ENCODE measurements at regions of chr1 and their contacts with region 1.

Region 1: GRCh38 chr1:172745014-172745413 is 86.1 kb downstream of the FASLG start:
- DNase-seq: peak; percentile 26
- H3K4me3 ChIP-seq: no peak overlapping the region
- H3K27ac ChIP-seq: peak overlapping the region in 3 of 4 donors; percentile 52 to 75 (median 59)
- H3K4me1 ChIP-seq: peaks cover 0 to 24% (median 12%) of the 10 kb centered on the region in 4 donors
- H3K27me3 ChIP-seq: no peaks in the 10 kb centered on the region
- CTCF ChIP-seq: peak; percentile 52 to 82 (median 61)
- EP300 ChIP-seq: no peak
- POLR2A ChIP-seq: no peak

Region 2: DNA sequence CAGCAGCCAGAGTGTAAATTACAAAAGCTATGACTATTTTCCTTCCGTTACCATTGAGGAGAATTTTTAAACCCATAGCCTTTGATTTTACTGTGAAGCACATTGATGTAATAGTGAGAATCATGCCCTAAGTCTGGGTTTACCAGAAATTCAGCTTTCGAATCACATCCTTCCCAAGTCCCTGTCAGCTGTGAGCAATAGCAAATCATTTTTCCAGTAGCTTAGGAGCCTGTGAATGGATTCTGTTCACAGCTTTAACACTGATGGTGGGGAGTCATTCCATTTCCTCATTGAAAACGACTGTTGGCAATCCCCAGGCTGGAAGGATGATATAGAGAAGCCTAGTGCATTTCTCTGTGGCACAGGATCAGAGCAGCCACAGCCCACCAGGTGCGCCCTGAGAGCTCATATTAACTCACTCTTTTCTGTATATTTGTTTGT is 406.7 kb before region 1 on chr1:
- in situ Hi-C with region 1: no loop called
- intact Hi-C with region 1: no loop called
- DNase-seq: no peak
- H3K4me3 ChIP-seq: no peak overlapping the region
- H3K27ac ChIP-seq: no peak overlapping the region
- H3K4me1 ChIP-seq: peaks cover 0 to 7% (median 3%) of the 10 kb centered on the region in 4 donors
- H3K27me3 ChIP-seq: no peaks in the 10 kb centered on the region
- CTCF ChIP-seq: no peak
- EP300 ChIP-seq: no peak
- POLR2A ChIP-seq: no peak

Region 3: DNA sequence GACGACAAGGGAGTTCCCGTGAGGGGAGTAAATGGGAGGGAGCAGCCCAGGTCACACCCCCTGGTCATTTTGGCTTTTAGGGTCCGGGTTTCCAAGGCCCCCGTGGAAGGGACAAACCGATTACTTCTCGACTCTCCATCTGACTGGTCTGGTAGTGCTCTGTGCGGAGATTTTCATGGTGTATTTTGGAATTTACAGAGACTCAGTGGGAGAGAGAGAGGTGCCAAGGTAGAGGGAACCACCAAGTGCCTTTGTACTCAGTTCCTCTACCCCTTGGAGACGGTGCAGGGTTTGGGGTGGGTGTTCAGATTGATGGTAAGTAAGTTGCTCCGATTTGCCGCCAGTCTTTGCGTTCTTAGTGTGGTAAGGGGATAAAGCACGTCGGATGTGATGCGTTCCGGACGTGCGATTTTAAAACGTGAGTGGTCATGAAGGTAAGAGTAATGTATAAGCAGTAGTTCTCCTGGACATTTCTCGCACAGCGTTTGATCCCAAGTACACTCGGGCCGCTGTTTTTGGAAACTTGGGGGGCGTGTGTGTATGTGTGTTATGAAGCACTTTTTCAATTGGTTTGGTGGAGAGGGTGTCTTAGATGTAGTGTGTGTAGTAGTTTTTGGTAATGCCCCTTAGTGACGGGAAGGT is 211.4 kb before region 1 on chr1:
- in situ Hi-C with region 1: no loop called
- intact Hi-C with region 1: no loop called
- DNase-seq: no peak
- H3K4me3 ChIP-seq: peak overlapping the region; percentile 72 to 85 (median 78)
- H3K27ac ChIP-seq: peak overlapping the region; percentile 97 to 99 (median 99)
- H3K4me1 ChIP-seq: peaks cover 7 to 37% (median 22%) of the 10 kb centered on the region in 4 donors
- H3K27me3 ChIP-seq: no peaks in the 10 kb centered on the region
- CTCF ChIP-seq: peak in 1 of 5 experiments; percentile 4
- EP300 ChIP-seq: no peak
- POLR2A ChIP-seq: no peak

Region 4: DNA sequence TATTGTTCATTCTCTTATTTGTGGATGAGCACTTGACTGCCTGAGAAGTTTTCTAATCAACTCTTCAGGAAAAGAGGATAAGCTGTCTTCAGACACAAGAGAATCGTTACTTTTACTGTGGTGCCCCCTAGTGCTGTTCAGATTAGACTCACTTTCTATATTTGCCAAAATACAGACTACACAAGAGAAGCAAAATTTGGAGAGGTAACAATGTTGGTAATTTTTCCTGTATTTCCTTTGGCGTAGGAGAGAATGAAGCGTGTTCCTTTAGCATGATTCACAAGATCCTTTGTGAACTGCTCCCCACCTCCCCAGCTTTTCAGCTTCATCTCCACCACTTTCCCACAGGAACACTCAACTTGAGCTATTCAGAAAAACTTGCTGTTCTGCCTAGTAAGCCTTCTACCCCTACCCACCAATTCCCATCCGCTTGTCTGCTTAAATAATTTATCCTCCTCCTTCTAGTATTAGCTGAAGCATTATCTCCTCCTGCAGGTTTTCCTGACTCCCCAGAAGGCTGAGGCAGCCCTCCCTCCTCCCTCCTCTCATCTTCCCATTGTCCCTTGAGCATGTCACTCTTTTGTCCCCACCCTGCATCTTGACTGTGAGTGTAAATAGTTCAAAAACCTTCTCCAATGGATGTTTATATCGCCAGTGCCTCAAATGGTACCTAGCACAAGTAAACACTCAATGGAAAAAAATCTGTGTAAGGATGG is 457.6 kb after region 1 on chr1:
- in situ Hi-C with region 1: loop called in 3 of 4 experiments (anchors 5 to 10 kb)
- intact Hi-C with region 1: loop called (anchors 10 kb)
- DNase-seq: peak; percentile 16
- H3K4me3 ChIP-seq: no peak overlapping the region
- H3K27ac ChIP-seq: no peak overlapping the region
- H3K4me1 ChIP-seq: peaks cover 0 to 27% (median 7%) of the 10 kb centered on the region in 4 donors
- H3K27me3 ChIP-seq: no peaks in the 10 kb centered on the region
- CTCF ChIP-seq: peak; percentile 54 to 75 (median 63)
- EP300 ChIP-seq: no peak
- POLR2A ChIP-seq: no peak

Region 5: GRCh38 chr1:173212952-173213491 is 468.0 kb after region 1 on chr1:
- in situ Hi-C with region 1: loop called in 3 of 4 experiments (anchors 5 to 10 kb)
- intact Hi-C with region 1: loop called (anchors 10 kb)
- DNase-seq: no peak
- H3K4me3 ChIP-seq: no peak overlapping the region
- H3K27ac ChIP-seq: no peak overlapping the region
- H3K4me1 ChIP-seq: peaks cover 0 to 14% (median 7%) of the 10 kb centered on the region in 4 donors
- H3K27me3 ChIP-seq: no peaks in the 10 kb centered on the region
- CTCF ChIP-seq: no peak
- EP300 ChIP-seq: no peak
- POLR2A ChIP-seq: no peak

Region 6: DNA sequence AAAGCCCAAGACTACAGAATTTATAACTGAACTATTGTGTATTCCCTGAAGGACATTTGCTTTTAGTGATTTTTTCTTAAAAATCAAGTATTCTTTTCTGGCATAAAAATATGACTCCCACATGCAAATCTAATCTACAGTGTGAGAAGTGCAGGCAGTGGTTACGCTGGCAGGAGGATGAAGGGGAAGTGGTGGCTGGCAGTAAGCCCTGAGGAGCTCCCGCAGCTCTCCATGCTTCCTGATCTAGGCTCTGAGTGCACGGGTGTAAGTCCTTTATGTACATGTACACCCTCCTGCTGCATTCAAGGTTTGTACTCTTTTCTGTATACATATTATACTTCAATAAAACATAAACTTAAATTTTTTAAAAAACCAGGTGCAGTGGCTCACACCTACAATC is 664.6 kb after region 1 on chr1:
- in situ Hi-C with region 1: loop called in 3 of 4 experiments (anchors 10 to 25 kb)
- intact Hi-C with region 1: no loop called
- DNase-seq: peak; percentile 47
- H3K4me3 ChIP-seq: no peak overlapping the region
- H3K27ac ChIP-seq: peak overlapping the region in 1 of 4 donors; percentile 6
- H3K4me1 ChIP-seq: peaks cover 0 to 12% (median 7%) of the 10 kb centered on the region in 4 donors
- H3K27me3 ChIP-seq: no peaks in the 10 kb centered on the region
- CTCF ChIP-seq: no peak
- EP300 ChIP-seq: no peak
- POLR2A ChIP-seq: no peak

Region 7: GRCh38 chr1:173420330-173420806 is 675.4 kb after region 1 on chr1:
- in situ Hi-C with region 1: loop called in 3 of 4 experiments (anchors 10 to 25 kb)
- intact Hi-C with region 1: no loop called
- DNase-seq: peak; percentile 60
- H3K4me3 ChIP-seq: no peak overlapping the region
- H3K27ac ChIP-seq: peak overlapping the region in 2 of 4 donors; percentile 33 to 38
- H3K4me1 ChIP-seq: peaks cover 0 to 31% (median 10%) of the 10 kb centered on the region in 4 donors
- H3K27me3 ChIP-seq: no peaks in the 10 kb centered on the region
- CTCF ChIP-seq: peak; percentile 88 to 93 (median 90)
- EP300 ChIP-seq: no peak
- POLR2A ChIP-seq: no peak

Region 8: DNA sequence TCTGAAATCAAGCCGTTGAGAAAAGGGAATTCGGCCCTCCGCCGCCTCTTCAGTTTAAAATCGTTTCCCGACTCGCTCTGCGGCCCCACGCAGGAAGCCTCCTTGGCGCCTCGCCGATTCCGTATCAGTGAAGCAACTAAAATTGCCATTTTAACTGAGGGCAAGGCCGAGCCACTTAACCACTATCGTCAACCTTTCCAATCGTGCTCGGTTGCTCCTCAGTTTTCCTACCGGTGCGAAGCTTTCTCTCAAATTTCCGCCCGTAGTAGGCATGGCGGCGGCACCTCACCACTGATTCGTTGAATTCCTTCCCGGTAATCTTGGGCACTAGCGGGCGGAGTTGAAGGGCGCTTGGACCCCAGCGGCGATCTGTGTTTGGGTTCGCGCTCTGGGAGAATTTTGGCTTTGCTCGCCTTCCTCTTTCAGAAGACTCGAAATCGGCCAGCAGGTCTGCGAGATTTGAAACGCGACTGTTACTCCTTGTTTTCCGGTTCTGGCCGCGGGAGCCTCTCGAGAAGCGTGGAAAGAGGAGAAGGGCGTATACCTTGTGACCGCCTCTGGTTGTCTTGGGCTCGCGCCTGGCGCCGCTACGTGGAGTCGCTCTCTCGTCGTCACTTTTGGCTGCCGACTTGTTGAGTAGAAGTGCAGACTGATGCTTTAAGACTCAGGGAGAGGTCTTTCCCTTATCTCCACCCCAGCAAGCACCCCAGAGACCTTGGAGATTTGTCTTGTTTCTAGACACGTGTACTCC is 1079.5 kb after region 1 on chr1 and contains the starts of genes CENPL and DARS2:
- in situ Hi-C with region 1: loop called in 2 of 4 experiments (anchors 25 kb)
- intact Hi-C with region 1: no loop called
- DNase-seq: peak; percentile 96
- H3K4me3 ChIP-seq: peak within 1 kb of the TSS; percentile 48 to 89 (median 64)
- H3K27ac ChIP-seq: peak within 1 kb of the TSS; percentile 91 to 94 (median 92)
- H3K4me1 ChIP-seq: peaks cover 8 to 32% (median 8%) of the 10 kb centered on the region in 4 donors
- H3K27me3 ChIP-seq: no peaks in the 10 kb centered on the region
- CTCF ChIP-seq: peak in 1 of 5 experiments; percentile 28
- EP300 ChIP-seq: no peak
- POLR2A ChIP-seq: peak; percentile 62
- total RNA-seq, gene CENPL: 4.3 to 6.7 (median 4.9) TPM in 3 of 4 donors, not detected in the other
- total RNA-seq, gene DARS2: 12.0 to 19.7 (median 16.6) TPM

Measured in transverse colon (tissue), 4 donors.